Activated CD4-positive, alpha-beta memory T cell treated with anti-CD3 and anti-CD28 coated beads, Interleukin-2, amount 10 ng/mL, durations not matched to agents 7 days and 5 days (primary cell): ENCODE measurements at regions of chr15 and their contacts with region 1.

Region 1: GRCh38 chr15:84633311-84634227 is 20.5 kb downstream of the WDR73 start:
- DNase-seq: peak; percentile 72
- H3K4me3 Mint-ChIP-seq: peak overlapping the region; percentile 89
- H3K27ac Mint-ChIP-seq: peak overlapping the region; percentile 99
- H3K4me1 Mint-ChIP-seq: peaks cover 57% of the 10 kb centered on the region
- H3K27me3 Mint-ChIP-seq: no peaks in the 10 kb centered on the region

Region 2: GRCh38 chr15:84570164-84570735 is 63.3 kb before region 1 on chr15:
- CTCF ChIA-PET with region 1: interaction called, 21 read pairs
- POLR2A ChIA-PET with region 1: interaction called, 11 read pairs
- DNase-seq: peak; percentile 70
- H3K4me3 Mint-ChIP-seq: peak overlapping the region; percentile 88
- H3K27ac Mint-ChIP-seq: peak overlapping the region; percentile 79
- H3K4me1 Mint-ChIP-seq: peaks cover 20% of the 10 kb centered on the region
- H3K27me3 Mint-ChIP-seq: peaks cover 2% of the 10 kb centered on the region

Region 3: DNA sequence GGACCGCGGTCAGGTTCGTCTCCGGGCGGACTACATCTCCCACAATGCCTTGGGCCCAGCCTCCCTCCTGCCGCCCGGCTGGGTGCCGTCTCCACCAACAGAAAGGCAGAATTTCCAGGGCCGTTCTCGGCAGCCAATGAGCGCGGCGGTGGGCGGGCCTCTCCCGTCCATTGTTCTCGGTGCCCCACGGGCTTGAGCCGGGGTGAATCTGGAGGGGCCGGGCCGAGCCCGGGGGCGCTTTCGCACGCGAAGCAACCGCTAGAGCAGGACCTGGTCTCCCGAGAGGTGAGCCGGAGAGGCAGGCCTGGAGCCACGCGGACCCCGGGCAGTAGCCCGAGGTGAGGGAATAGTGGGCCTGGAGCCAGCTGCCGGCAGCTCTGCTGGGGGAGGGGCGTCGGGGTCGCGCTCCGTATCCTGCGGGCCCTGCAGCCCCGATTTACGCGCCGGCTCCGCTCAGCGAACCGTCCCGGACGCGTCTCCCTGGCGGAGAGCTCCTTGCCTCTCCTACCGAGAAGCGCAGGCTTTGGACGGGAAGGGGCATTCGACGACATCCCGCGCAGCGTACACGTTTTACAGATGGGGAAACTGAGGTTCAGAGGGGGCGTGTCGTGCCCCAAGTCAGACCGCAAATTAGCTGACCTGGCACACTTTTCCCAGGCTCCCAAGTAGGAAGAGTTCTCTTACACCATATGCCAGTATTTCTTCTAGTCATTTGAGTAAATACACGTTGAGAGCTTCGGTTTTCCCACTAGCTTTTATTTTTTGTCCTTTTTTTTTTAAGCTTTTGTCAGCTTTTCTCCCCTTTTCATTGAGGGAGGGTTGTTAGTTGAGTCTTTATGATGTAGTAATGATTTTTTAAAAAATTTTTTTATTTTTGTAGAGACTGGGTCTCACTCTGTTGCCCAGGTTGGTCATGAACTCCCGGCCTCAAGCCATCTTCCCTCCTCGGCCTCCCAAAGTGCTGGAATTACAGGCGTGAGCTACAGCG is 32.4 kb before region 1 on chr15 and contains the start of gene ZSCAN2:
- CTCF ChIA-PET with region 1: interaction called, 15 read pairs
- POLR2A ChIA-PET with region 1: interaction called, 26 read pairs
- DNase-seq: peak; percentile 96
- H3K4me3 Mint-ChIP-seq: peak within 1 kb of the TSS; percentile 91
- H3K27ac Mint-ChIP-seq: peak within 1 kb of the TSS; percentile 50
- H3K4me1 Mint-ChIP-seq: peaks cover 76% of the 10 kb centered on the region
- H3K27me3 Mint-ChIP-seq: no peaks in the 10 kb centered on the region
- total RNA-seq, gene ZSCAN2: 10.8 to 10.9 TPM

Region 4: GRCh38 chr15:84643838-84644237 is 10.3 kb after region 1 on chr15:
- CTCF ChIA-PET with region 1: interaction called, 4 read pairs
- POLR2A ChIA-PET with region 1: interaction called, 10 read pairs
- DNase-seq: no peak
- H3K4me3 Mint-ChIP-seq: no peak overlapping the region
- H3K27ac Mint-ChIP-seq: no peak overlapping the region
- H3K4me1 Mint-ChIP-seq: peaks cover 15% of the 10 kb centered on the region
- H3K27me3 Mint-ChIP-seq: no peaks in the 10 kb centered on the region

Region 5: GRCh38 chr15:84716036-84716799 is 82.6 kb after region 1 on chr15 and contains the start of gene SEC11A:
- CTCF ChIA-PET with region 1: interaction called, 4 read pairs
- POLR2A ChIA-PET with region 1: interaction called, 17 read pairs
- DNase-seq: peak; percentile 94
- H3K4me3 Mint-ChIP-seq: peak within 1 kb of the TSS; percentile 94
- H3K27ac Mint-ChIP-seq: peak within 1 kb of the TSS; percentile 96
- H3K4me1 Mint-ChIP-seq: peaks cover 51% of the 10 kb centered on the region
- H3K27me3 Mint-ChIP-seq: no peaks in the 10 kb centered on the region
- total RNA-seq, gene SEC11A: 132 to 139 TPM